Activated B cell treated with CpG ODN at 0.5 μM for 24 hours (primary cell): ENCODE measurements at regions of chr17 and their contacts with region 1.

Region 1: DNA sequence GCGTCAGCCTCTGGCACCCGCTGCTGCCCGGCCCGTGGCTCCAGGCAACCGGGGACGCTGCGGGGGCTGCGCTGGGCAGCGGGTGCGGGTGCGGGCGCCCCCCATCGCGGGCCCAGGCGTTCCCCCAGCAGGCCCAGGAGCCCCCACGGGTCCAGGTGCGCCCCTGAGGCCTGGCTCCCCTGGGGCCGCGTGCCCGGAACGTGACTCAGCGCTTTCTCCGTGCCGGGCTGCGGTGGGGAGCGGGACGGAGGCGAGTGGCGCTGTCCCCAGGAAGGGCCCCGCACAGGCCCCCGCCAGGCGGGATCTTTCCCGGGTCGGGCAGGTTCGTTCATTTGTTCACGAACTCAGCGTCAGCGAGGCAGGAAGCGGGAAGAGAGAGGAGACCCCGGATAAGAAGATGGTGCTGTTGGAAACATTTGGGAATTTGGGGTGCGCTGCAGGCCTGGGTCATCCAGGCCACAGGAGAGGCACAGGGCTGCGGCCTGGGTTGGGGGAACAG is 18.4 kb upstream of the EXOC7 start:
- DNase-seq: no peak
- ATAC-seq: peak; percentile 29
- H3K4me3 Mint-ChIP-seq: peak overlapping the region; percentile 62
- H3K27ac Mint-ChIP-seq: peak overlapping the region; percentile 50
- H3K4me1 Mint-ChIP-seq: peaks cover 17% of the 10 kb centered on the region
- H3K27me3 Mint-ChIP-seq: peaks cover 3% of the 10 kb centered on the region
- CTCF ChIP-seq: no peak

Region 2: GRCh38 chr17:76141212-76142038 is 19.4 kb after region 1 on chr17 and contains the start of gene FOXJ1:
- CTCF ChIA-PET with region 1: interaction called, 6 read pairs
- POLR2A ChIA-PET with region 1: interaction called, 4 read pairs
- intact Hi-C with region 1: loop called (anchors 2 kb)
- DNase-seq: peak; percentile 91
- ATAC-seq: peak; percentile 75
- H3K4me3 Mint-ChIP-seq: peak within 1 kb of the TSS; percentile 80
- H3K27ac Mint-ChIP-seq: peak within 1 kb of the TSS; percentile 61
- H3K4me1 Mint-ChIP-seq: peaks cover 60% of the 10 kb centered on the region
- H3K27me3 Mint-ChIP-seq: peaks cover 10% of the 10 kb centered on the region
- CTCF ChIP-seq: no peak
- total RNA-seq, gene FOXJ1: 0.39 and 0.44 TPM in 2 replicates

Region 3: GRCh38 chr17:76182016-76182764 is 60.2 kb after region 1 on chr17:
- CTCF ChIA-PET with region 1: interaction called, 22 read pairs
- POLR2A ChIA-PET with region 1: interaction called, 7 read pairs
- intact Hi-C with region 1: loop called (anchors 1 kb)
- DNase-seq: peak; percentile 87
- ATAC-seq: peak; percentile 97
- H3K4me3 Mint-ChIP-seq: no peak overlapping the region
- H3K27ac Mint-ChIP-seq: no peak overlapping the region
- H3K4me1 Mint-ChIP-seq: peaks cover 34% of the 10 kb centered on the region
- H3K27me3 Mint-ChIP-seq: no peaks in the 10 kb centered on the region
- CTCF ChIP-seq: peak; percentile 21